B cell (primary cell): ENCODE measurements at regions of chr4 and their contacts with region 1.

Region 1: GRCh38 chr4:48681856-48682255 is 98.2 kb downstream of the FRYL start:
- DNase-seq: peak; percentile 46
- ATAC-seq: no peak
- H3K4me3 ChIP-seq: no peak overlapping the region
- H3K4me3 Mint-ChIP-seq: no peak overlapping the region
- H3K27ac ChIP-seq: peak overlapping the region in 1 of 2 donors; percentile 16
- H3K27ac Mint-ChIP-seq: peak overlapping the region; percentile 37
- H3K4me1 ChIP-seq: peaks cover 6 to 20% of the 10 kb centered on the region in 2 donors
- H3K4me1 Mint-ChIP-seq: peaks cover 42% of the 10 kb centered on the region
- H3K27me3 ChIP-seq: no peaks in the 10 kb centered on the region
- H3K27me3 Mint-ChIP-seq: no peaks in the 10 kb centered on the region
- CTCF ChIP-seq: peak; percentile 54

Region 2: GRCh38 chr4:48509543-48509942 is 172.3 kb before region 1 on chr4:
- CTCF ChIA-PET with region 1: no interaction called
- POLR2A ChIA-PET with region 1: no interaction called
- intact Hi-C with region 1: no loop called
- DNase-seq: no peak
- ATAC-seq: no peak
- H3K4me3 ChIP-seq: no peak overlapping the region
- H3K4me3 Mint-ChIP-seq: no peak overlapping the region
- H3K27ac ChIP-seq: no peak overlapping the region
- H3K27ac Mint-ChIP-seq: no peak overlapping the region
- H3K4me1 ChIP-seq: no peaks in the 10 kb centered on the region
- H3K4me1 Mint-ChIP-seq: no peaks in the 10 kb centered on the region
- H3K27me3 ChIP-seq: no peaks in the 10 kb centered on the region
- H3K27me3 Mint-ChIP-seq: no peaks in the 10 kb centered on the region
- CTCF ChIP-seq: no peak

Region 3: GRCh38 chr4:48602222-48602621 is 79.6 kb before region 1 on chr4:
- CTCF ChIA-PET with region 1: no interaction called
- POLR2A ChIA-PET with region 1: no interaction called
- intact Hi-C with region 1: no loop called
- DNase-seq: no peak
- ATAC-seq: no peak
- H3K4me3 ChIP-seq: no peak overlapping the region
- H3K4me3 Mint-ChIP-seq: no peak overlapping the region
- H3K27ac ChIP-seq: no peak overlapping the region
- H3K27ac Mint-ChIP-seq: no peak overlapping the region
- H3K4me1 ChIP-seq: no peaks in the 10 kb centered on the region
- H3K4me1 Mint-ChIP-seq: no peaks in the 10 kb centered on the region
- H3K27me3 ChIP-seq: no peaks in the 10 kb centered on the region
- H3K27me3 Mint-ChIP-seq: no peaks in the 10 kb centered on the region
- CTCF ChIP-seq: no peak

Region 4: GRCh38 chr4:48635310-48635709 is 46.5 kb before region 1 on chr4:
- CTCF ChIA-PET with region 1: no interaction called
- POLR2A ChIA-PET with region 1: no interaction called
- intact Hi-C with region 1: loop called (anchors 10 kb)
- DNase-seq: no peak
- ATAC-seq: no peak
- H3K4me3 ChIP-seq: no peak overlapping the region
- H3K4me3 Mint-ChIP-seq: no peak overlapping the region
- H3K27ac ChIP-seq: peak overlapping the region in 1 of 2 donors; percentile 52
- H3K27ac Mint-ChIP-seq: peak overlapping the region; percentile 50
- H3K4me1 ChIP-seq: peaks cover 9 to 23% of the 10 kb centered on the region in 2 donors
- H3K4me1 Mint-ChIP-seq: peaks cover 11% of the 10 kb centered on the region
- H3K27me3 ChIP-seq: no peaks in the 10 kb centered on the region
- H3K27me3 Mint-ChIP-seq: no peaks in the 10 kb centered on the region
- CTCF ChIP-seq: no peak

Region 5: DNA sequence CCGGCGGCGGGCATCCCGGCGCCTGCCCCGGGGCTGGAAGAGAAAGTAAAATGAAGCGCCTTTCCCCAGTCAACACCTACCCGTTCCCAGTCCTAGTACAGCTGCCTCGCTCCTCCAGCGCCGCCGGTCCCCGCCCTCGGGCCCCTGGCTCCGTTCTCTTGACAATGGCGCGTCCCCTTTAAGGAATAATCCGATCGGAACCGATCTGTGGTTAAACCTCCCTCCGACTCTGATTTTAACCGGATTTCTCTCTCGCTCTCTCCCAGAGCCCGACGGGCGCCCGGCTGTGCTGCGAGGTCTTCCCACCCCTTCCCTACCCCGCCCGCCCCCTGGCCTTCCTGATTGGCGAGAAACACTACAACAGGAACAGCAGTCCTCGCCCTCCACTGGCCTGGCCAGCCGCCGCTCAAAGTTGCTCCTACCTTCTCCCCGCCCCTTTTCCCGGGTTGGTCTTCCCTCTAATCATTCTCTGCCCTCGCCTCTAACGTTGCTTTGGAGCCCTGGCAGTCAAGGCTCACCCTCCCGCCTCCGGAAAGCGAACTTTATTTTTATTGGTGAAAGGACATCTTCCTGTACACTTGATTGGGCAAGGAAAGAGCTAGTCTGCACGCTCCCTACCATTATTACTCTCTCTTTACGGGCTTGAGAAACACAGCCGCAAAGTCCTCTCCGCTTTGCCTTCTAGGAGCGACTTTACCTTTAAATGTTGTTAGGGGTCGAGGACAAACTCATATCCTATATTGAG is 98.3 kb after region 1 on chr4 and contains the start of gene FRYL:
- CTCF ChIA-PET with region 1: interaction called, 3 read pairs
- POLR2A ChIA-PET with region 1: no interaction called
- intact Hi-C with region 1: loop called (anchors 10 kb)
- DNase-seq: peak; percentile 97
- ATAC-seq: peak; percentile 88
- H3K4me3 ChIP-seq: peak within 1 kb of the TSS; percentile 87 to 99 (median 94)
- H3K4me3 Mint-ChIP-seq: peak within 1 kb of the TSS; percentile 89
- H3K27ac ChIP-seq: peak within 1 kb of the TSS; percentile 67 to 80
- H3K27ac Mint-ChIP-seq: peak within 1 kb of the TSS; percentile 89
- H3K4me1 ChIP-seq: peaks cover 27 to 35% of the 10 kb centered on the region in 2 donors
- H3K4me1 Mint-ChIP-seq: peaks cover 39% of the 10 kb centered on the region
- H3K27me3 ChIP-seq: no peaks in the 10 kb centered on the region
- H3K27me3 Mint-ChIP-seq: no peaks in the 10 kb centered on the region
- CTCF ChIP-seq: no peak
- total RNA-seq, gene FRYL: 133 and 138 TPM in 2 replicates

Region 6: DNA sequence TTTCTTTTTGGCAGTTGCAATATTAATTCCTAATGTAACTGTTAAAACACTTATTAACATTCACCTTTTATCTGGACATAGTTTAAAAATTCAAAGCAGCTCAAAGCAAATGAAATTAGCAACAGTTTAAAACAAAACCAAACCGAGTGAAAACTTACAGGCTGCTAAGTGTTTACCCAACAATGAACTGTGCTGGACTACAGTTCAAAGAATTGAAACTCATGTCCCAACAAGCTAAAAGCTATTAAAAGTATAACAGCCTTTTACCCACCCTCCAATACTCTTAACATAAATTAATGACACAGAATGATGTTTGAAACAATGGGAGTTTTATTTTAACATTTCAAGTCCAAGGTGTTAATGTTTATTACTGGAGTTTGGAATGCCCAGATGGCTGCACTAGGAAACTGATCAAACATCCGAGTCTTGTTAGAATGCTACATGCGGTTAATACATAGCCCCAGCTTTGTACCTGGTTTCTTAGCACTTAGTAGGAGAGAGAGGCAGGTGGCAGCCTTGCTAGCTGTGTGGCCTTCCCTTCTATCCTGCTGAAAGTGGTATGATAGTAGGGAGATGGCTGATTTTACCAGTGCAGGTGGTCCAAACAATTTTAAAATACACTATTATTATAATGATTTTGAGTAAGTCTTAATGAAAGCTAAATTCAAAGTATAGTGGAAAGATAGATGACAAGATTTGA is 119.3 kb after region 1 on chr4:
- CTCF ChIA-PET with region 1: no interaction called
- POLR2A ChIA-PET with region 1: interaction called, 13 read pairs
- intact Hi-C with region 1: no loop called
- DNase-seq: no peak
- ATAC-seq: no peak
- H3K4me3 ChIP-seq: no peak overlapping the region
- H3K4me3 Mint-ChIP-seq: no peak overlapping the region
- H3K27ac ChIP-seq: no peak overlapping the region
- H3K27ac Mint-ChIP-seq: no peak overlapping the region
- H3K4me1 ChIP-seq: peaks cover 0 to 8% of the 10 kb centered on the region in 2 donors
- H3K4me1 Mint-ChIP-seq: peaks cover 3% of the 10 kb centered on the region
- H3K27me3 ChIP-seq: no peaks in the 10 kb centered on the region
- H3K27me3 Mint-ChIP-seq: no peaks in the 10 kb centered on the region
- CTCF ChIP-seq: no peak

Region 7: GRCh38 chr4:48906206-48907173 is 224.6 kb after region 1 on chr4 and contains the start of gene OCIAD2:
- CTCF ChIA-PET with region 1: no interaction called
- POLR2A ChIA-PET with region 1: no interaction called
- intact Hi-C with region 1: loop called (anchors 5 kb)
- DNase-seq: peak; percentile 88
- ATAC-seq: peak; percentile 97
- H3K4me3 ChIP-seq: peak within 1 kb of the TSS; percentile 36 to 80 (median 71)
- H3K4me3 Mint-ChIP-seq: peak within 1 kb of the TSS; percentile 93
- H3K27ac ChIP-seq: peak within 1 kb of the TSS; percentile 58 to 82
- H3K27ac Mint-ChIP-seq: peak within 1 kb of the TSS; percentile 86
- H3K4me1 ChIP-seq: peaks cover 16 to 20% of the 10 kb centered on the region in 2 donors
- H3K4me1 Mint-ChIP-seq: peaks cover 27% of the 10 kb centered on the region
- H3K27me3 ChIP-seq: no peaks in the 10 kb centered on the region
- H3K27me3 Mint-ChIP-seq: no peaks in the 10 kb centered on the region
- CTCF ChIP-seq: peak; percentile 51
- total RNA-seq, gene OCIAD2: 37.0 and 39.3 TPM in 2 replicates

Region 8: DNA sequence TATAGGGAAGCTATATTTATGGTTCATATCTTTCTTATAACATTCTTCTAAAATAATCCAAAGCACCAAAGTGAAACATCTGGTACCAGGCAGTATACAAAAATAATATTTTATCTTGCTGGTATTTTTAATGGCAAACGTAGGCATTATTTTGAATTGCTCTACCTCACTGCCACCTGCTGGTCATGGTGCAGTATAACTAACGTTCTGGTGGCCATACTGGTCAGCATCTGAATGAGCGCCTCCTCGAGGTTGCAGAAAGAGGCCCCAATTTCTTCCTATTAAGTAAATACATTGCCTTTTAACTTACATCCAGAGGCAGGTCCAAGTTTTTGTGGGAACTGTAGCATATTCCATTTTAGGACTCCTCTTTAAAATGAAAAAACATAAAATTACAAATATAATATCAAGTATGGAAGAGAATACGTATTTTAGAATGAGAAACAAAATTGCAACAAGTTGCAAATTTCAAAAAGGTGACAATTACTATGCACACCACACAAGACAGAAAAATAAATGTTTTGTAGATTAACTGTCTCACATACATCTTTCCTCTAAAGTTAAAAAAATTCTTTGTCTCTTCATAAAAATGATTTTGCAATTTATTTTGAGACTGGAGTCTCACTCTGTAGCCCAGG is 281.3 kb after region 1 on chr4:
- CTCF ChIA-PET with region 1: no interaction called
- POLR2A ChIA-PET with region 1: no interaction called
- intact Hi-C with region 1: loop called (anchors 2 kb)
- DNase-seq: peak; percentile 80
- ATAC-seq: peak; percentile 96
- H3K4me3 ChIP-seq: no peak overlapping the region
- H3K4me3 Mint-ChIP-seq: no peak overlapping the region
- H3K27ac ChIP-seq: no peak overlapping the region
- H3K27ac Mint-ChIP-seq: no peak overlapping the region
- H3K4me1 ChIP-seq: no peaks in the 10 kb centered on the region
- H3K4me1 Mint-ChIP-seq: no peaks in the 10 kb centered on the region
- H3K27me3 ChIP-seq: no peaks in the 10 kb centered on the region
- H3K27me3 Mint-ChIP-seq: peaks cover 12% of the 10 kb centered on the region
- CTCF ChIP-seq: peak; percentile 99